Endothelial cell of umbilical vein (primary cell): ENCODE measurements at regions of chr15 and their contacts with region 1.

Region 1: DNA sequence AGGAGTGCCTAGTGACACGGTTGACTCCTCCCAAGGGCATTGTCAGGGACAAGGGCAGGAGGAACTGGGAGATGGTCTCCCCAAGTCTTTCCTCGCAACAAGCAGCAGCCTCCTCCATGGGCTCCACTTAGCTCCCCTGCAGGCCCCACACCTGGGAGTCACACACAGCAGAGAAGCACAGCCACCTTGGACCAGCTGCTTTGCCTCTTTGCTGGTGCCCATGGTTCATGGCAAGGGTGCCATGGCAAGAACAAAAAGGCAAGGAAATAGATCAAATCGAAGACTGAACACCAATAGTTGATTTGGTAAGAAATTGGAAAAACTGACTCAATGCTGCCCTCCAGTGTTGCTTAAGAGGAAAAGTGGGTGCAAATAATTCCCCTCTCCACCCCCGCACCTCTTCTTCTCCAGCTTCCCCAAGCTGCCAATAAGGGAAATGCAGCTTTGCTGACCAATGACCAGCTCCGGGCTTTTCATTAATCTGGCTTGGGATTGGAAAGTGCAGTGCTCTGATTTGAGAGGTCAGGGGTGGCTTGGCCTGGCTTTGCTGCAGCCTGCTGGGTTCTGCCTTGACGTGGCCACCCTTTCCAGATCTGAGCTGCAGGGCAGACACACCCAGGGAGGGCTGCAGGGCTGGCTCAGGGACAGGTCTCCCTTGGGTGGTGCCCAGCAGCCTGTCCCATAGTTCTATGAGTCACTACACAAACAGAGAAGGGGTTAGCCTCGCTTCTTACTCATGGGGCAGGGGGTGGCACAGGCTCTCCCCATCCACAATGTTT is 162.0 kb downstream of the KLF13 start:
- DNase-seq: peak; percentile 81
- H3K4me3 ChIP-seq: no peak overlapping the region
- H3K27ac ChIP-seq: no peak overlapping the region
- H3K4me1 ChIP-seq: peaks cover 5% of the 10 kb centered on the region
- H3K27me3 ChIP-seq: peaks cover 13 to 18% of the 10 kb centered on the region in 2 experiments
- CTCF ChIP-seq: peak; percentile 84 to 90
- POLR2A ChIP-seq: no peak

Region 2: DNA sequence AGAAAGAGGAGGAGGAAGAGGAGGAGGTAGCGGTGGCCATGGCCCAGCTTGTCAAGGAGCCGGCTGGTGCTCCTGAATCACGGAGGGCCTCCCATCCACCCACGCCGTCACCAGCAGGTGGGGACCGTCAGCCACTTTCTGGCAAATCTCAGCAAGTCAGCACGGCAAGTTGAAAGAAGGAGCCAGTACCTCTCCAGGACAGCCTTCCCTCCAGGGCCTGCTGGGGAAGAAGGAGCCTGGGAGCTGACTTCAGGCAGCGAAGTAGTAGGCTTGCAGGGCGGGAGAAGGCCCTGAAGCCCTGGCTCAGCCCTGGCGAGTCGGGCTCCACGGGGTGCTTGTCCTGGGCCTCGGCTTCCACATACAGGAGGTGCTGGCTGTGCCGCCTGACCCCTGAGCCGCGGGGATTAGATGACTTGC is 287.9 kb before region 1 on chr15:
- CTCF ChIA-PET with region 1: interaction called, 155 read pairs
- POLR2A ChIA-PET with region 1: no interaction called
- dilution Hi-C with region 1: loop called (anchors 25 kb)
- intact Hi-C with region 1: loop called (anchors 1 kb)
- DNase-seq: peak; percentile 24
- H3K4me3 ChIP-seq: no peak overlapping the region
- H3K27ac ChIP-seq: no peak overlapping the region
- H3K4me1 ChIP-seq: no peaks in the 10 kb centered on the region
- H3K27me3 ChIP-seq: no peaks in the 10 kb centered on the region
- CTCF ChIP-seq: peak; percentile 22 to 24
- POLR2A ChIP-seq: no peak

Region 3: DNA sequence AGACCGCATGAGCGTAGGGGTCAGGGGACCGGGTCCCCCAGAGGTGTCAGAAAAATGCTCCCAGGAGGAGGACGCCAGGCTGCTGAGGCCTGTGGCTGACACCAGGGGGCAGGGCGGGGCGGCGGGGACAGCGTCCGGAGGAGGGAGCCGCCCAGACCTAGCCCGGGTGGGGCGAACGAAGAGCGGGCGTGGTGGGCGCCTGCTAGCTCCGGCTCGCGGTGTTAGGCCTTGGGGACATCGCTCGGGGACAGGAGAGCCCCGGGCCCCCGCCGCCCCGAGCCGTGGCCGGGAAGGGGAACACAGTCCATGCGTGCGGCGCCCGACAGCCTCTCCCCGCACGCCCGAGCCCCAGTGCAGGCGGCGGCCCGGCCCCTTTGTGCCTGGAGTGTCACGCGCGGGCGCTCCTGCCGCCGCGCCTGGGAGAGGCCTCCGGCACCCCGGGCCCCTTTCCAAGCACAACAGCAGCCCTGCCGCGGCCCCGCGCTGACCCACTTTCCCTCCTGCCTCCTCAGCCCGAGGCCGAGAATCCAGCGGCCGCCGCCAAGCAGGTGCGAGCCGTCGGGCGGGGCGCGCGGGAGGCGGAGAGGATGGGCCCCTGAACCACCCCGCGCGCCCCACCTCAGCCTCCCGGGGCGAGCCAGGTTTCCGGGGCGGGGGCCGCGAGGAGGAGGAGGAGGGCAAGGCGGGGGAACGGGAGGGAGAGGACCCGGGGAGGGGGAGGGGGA is 273.0 kb before region 1 on chr15:
- CTCF ChIA-PET with region 1: interaction called, 91 read pairs
- POLR2A ChIA-PET with region 1: no interaction called
- dilution Hi-C with region 1: loop called (anchors 25 kb)
- intact Hi-C with region 1: loop called (anchors 1 kb)
- DNase-seq: peak; percentile 34
- H3K4me3 ChIP-seq: peak overlapping the region; percentile 30 to 45 (median 33)
- H3K27ac ChIP-seq: no peak overlapping the region
- H3K4me1 ChIP-seq: no peaks in the 10 kb centered on the region
- H3K27me3 ChIP-seq: peaks cover 7 to 8% of the 10 kb centered on the region in 2 experiments
- CTCF ChIP-seq: peak; percentile 73 to 90
- POLR2A ChIP-seq: no peak

Region 4: DNA sequence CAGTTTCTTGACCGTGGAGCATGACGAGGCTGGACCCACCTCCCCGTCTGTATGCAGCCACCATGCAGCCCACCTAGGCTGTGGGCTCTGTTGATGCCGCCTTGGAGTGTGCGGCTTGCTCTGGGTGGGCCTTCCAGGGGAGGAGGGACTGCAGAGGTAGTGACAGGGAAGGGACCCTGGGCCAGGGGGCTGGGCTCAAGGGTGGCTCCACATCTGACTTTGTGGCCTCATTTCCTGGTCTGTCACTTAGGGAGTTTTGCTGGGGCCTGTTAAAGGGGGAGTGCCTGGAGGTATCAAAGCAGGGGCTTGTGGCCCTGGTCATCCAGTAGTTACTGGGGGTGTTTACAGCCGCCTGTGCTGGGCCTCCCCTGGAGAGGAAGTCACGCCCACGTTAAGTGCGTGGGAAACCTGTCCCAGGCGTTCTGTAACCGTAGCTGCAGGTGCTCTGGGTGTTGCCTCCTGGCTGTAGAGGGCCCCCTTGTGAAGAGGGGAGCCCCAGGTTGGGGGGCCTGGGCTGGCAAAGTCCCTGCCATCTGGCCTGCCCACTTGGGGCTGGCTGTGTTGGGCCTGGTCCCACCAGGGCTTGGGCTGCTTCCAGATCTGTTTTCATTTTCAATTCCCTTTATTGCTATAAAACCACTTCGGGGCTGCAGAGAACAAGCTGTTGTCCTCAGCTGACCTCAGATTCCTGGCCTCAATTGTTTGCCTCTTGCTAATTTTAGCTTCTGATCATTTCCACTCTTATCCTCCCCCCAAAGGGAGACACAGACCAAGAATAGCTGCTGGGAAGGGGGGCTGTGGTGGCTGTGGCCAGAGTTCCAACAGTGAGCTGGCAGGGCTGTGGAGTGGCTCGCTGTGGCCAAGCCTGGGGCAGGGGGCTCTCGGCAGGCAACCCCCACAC is 135.5 kb before region 1 on chr15:
- CTCF ChIA-PET with region 1: interaction called, 10 read pairs
- POLR2A ChIA-PET with region 1: no interaction called
- dilution Hi-C with region 1: no loop called
- intact Hi-C with region 1: no loop called
- DNase-seq: peak; percentile 90
- H3K4me3 ChIP-seq: no peak overlapping the region
- H3K27ac ChIP-seq: peak overlapping the region; percentile 51
- H3K4me1 ChIP-seq: peaks cover 13% of the 10 kb centered on the region
- H3K27me3 ChIP-seq: no peaks in the 10 kb centered on the region
- CTCF ChIP-seq: no peak
- POLR2A ChIP-seq: no peak

Region 5: GRCh38 chr15:31435261-31435911 is 53.2 kb before region 1 on chr15:
- CTCF ChIA-PET with region 1: interaction called, 107 read pairs
- POLR2A ChIA-PET with region 1: no interaction called
- dilution Hi-C with region 1: no loop called
- intact Hi-C with region 1: loop called (anchors 1 kb)
- DNase-seq: peak; percentile 54
- H3K4me3 ChIP-seq: peak overlapping the region in 1 of 3 experiments; percentile 50
- H3K27ac ChIP-seq: peak overlapping the region; percentile 98
- H3K4me1 ChIP-seq: peaks cover 20% of the 10 kb centered on the region
- H3K27me3 ChIP-seq: no peaks in the 10 kb centered on the region
- CTCF ChIP-seq: peak; percentile 69 to 71
- POLR2A ChIP-seq: no peak

Region 6: GRCh38 chr15:31499953-31500765 is 11.5 kb after region 1 on chr15:
- CTCF ChIA-PET with region 1: interaction called, 23 read pairs
- POLR2A ChIA-PET with region 1: no interaction called
- dilution Hi-C with region 1: no loop called
- intact Hi-C with region 1: no loop called
- DNase-seq: no peak
- H3K4me3 ChIP-seq: no peak overlapping the region
- H3K27ac ChIP-seq: no peak overlapping the region
- H3K4me1 ChIP-seq: peaks cover 2% of the 10 kb centered on the region
- H3K27me3 ChIP-seq: no peaks in the 10 kb centered on the region
- CTCF ChIP-seq: no peak
- POLR2A ChIP-seq: no peak

Region 7: DNA sequence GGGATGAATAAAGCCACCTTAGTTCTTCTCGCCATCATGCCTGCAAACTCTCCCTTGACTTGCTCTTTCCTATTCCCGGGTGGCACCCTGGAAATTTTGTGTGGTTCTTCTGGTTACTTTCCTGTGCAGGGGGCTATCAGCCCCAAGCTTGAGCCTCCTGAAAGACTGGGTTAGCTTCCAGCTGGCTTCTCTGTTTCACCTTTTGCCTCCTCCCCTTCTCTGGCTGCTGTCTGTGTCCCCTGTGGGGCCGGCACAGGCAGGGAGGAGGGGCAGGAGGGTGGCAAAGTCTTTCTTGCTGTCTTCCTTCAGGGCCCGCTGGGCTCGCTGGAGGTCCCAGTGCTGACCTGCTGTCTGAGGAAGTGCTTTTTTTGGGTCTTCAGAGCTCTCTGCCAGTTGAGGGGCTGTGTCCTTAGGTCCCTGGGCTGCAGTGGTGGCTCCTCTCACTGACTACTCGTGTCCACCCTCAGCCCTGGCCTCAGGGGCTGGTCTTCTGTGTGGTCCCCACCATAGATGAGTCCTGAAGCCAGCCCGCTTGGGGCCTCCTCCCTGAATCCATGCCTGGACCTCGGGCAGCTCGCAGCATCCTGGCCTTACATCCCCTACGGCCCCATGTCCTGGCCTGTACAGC is 34.5 kb after region 1 on chr15:
- CTCF ChIA-PET with region 1: no interaction called
- POLR2A ChIA-PET with region 1: no interaction called
- dilution Hi-C with region 1: no loop called
- intact Hi-C with region 1: no loop called
- DNase-seq: no peak
- H3K4me3 ChIP-seq: no peak overlapping the region
- H3K27ac ChIP-seq: no peak overlapping the region
- H3K4me1 ChIP-seq: no peaks in the 10 kb centered on the region
- H3K27me3 ChIP-seq: no peaks in the 10 kb centered on the region
- CTCF ChIP-seq: no peak
- POLR2A ChIP-seq: no peak

Region 8: DNA sequence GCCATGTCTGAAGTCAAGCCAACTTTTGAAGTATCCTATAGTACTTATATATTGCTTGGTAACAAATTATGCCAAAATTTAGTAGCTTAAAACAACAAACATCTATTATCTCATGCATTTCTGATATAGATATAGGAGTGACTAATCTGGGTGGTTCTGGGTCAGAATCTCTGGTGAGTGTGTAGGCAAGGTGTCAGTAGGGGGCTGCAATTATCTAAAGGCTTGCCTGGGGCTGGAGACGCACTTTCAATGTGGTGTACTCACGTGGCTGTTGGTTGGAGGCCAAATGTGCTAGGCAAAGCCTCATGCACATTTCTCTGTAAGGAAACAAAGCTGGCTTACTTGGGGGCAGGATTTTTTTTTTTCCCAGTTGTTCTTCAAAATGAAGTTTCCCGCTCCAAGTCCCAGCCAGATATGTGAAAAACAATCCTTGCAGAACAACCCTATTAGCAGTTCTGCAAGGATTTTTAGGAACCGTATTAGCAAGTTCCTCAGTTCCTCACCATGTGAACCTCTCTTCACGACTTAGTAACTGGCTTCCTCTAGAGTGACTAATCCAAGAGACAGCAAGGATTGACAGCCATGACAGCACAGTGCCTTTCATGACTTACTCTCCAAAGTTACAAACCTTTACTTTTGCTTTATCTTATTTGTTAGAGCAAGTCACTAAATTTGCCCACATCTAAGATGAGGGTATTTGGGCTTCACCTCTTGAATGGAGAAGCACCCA is 1255.0 kb after region 1 on chr15:
- CTCF ChIA-PET with region 1: no interaction called
- POLR2A ChIA-PET with region 1: no interaction called
- dilution Hi-C with region 1: no loop called
- intact Hi-C with region 1: no loop called
- DNase-seq: no peak
- H3K4me3 ChIP-seq: no peak overlapping the region
- H3K27ac ChIP-seq: no peak overlapping the region
- H3K4me1 ChIP-seq: no peaks in the 10 kb centered on the region
- H3K27me3 ChIP-seq: peaks cover 0 to 8% of the 10 kb centered on the region in 2 experiments
- CTCF ChIP-seq: no peak
- POLR2A ChIP-seq: no peak